ENCODE measurements at regions of chr15 and their contacts with region 1.

Region 1: DNA sequence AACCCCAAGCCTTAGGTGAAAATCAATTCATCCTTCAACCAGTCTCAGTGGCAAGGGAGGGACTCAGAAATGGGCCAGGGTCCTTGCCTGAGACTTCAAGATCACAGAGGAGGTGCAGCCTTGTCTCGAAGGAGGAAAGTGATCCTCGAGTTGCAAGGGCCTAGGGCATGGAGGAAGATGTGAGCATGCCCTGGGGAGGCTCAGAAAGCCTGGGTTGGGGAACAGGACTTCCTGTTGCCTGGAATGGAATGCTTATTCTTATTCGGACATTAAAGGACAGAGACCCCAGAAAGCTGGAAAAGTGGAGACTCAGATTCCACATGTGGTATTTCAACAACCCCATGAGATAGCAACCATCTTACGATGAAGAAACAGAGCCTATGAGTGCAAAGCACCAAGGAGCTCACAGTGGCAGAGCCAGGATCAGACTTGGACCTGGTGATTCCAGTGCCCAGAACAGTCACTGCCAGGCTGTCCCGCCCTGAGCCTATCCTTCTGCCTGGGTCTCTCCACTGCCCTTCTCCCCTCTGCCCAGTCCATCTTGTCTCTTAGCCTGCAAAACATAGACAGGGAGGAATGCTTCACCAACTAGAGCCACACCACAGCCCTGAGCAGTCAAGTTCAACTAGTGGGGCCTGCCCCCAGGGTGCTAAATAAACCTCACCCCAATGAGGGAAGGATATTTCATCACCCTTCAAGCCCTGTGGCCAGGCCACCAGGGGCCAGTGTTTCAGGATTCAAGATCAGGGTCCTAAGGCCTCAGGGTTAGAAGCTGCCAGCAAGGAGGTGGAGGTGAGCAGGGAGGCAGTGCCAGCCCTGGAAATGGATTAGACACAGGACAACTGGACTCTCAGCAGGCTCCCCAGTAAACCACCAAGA is 21.9 kb downstream of the DAPK2 start:
- DNase-seq: no peak
- H3K4me3 ChIP-seq: no peak overlapping the region
- H3K27ac ChIP-seq: no peak overlapping the region
- H3K4me1 ChIP-seq: peaks cover 13% of the 10 kb centered on the region
- H3K27me3 ChIP-seq: no peaks in the 10 kb centered on the region
- CTCF ChIP-seq: no peak
- POLR2A ChIP-seq: no peak

Region 2: DNA sequence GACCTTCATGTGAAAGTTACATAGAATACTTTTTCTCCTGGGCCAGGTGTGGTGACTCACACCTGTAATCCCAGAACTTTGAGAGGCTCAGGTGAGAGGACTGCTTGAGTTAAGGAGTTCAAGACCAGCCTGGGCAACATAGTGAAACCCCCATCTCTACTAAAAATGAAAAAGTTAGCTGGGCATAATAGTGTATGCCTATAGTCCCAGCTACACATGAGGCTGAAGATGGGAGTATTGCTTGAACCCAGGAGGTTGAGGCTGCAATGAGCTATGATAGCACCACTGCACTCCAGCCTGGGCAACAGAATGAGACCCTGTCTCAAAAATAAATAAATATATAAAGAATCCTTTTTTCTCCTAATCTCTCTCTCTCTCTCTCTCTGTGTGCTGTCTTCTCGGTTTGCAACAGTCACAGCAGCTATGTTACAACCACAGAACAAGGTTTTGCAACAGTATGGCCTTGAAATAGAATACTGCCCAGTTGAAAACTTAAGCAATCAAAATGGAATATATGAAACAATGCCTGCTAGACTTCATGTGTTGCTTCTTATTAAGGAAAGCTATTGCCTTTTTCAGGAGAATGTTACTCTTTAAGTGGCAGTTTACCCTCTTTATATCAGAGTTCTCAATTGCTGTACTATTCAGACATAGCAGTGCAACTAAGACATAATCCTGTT is 1780.0 kb after region 1 on chr15:
- intact Hi-C with region 1: loop called (anchors 5 kb)
- DNase-seq: no peak
- H3K4me3 ChIP-seq: no peak overlapping the region
- H3K27ac ChIP-seq: no peak overlapping the region
- H3K4me1 ChIP-seq: no peaks in the 10 kb centered on the region
- H3K27me3 ChIP-seq: no peaks in the 10 kb centered on the region
- CTCF ChIP-seq: no peak
- POLR2A ChIP-seq: no peak

Measured in vagina (tissue), 2 donors.